Sciatic nerve (tissue), 2 donors: ENCODE measurements at regions of chr9 and their contacts with region 1.

Region 1: DNA sequence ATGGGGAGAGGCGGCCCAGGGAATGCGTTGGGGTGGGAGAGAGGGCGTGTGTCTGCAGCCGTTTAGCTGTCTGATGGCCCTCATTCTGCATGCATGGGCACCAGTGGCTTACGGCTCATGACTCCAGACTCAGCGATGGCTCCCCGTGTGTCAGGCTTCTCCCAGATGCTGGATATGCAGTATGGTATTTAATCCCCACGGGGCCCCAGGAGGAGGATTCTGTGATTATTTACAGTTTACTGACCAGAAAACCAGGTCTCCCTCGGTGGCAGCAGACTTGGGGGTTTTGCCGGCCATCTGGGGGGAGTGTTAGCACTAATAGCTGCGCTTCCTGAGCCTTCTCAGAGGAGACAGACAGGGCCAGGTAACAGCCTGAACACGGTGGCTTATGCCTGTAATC is 4.3 kb downstream of the PRDM12 start:
- DNase-seq: no peak
- ATAC-seq: no peak

Region 2: DNA sequence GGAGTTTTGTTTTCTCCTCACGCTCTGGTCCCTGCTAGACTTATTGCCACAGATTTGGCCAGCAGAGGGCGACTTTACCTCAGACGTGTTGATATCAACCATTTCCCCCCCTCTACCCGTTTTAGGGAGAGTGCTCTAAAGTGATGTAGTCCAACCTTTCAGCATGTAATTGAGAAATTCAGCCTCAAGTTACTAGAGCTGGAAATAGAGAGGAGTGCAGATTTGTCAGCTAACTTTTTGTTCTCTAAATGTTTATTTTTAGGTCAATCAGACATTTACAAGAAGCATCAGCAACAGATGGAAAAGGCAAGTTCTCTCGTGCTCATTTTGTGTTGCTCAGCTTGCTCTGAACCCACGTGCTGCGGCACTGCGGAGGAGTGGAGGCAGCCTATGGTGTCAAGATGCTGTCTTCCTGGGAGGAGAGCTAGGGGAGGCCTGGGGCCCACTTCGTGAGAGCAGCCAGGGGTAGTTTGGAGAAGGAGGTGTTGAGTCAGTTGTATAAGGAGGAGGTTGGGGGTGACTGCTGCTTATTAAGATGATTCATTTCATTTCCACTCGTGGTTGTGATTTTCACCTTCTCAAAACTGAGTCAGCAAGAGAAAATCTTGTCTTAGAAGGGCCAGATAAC is 561.3 kb before region 1 on chr9:
- intact Hi-C with region 1: no loop called
- DNase-seq: peak; percentile 95
- ATAC-seq: peak; percentile 91

Region 3: DNA sequence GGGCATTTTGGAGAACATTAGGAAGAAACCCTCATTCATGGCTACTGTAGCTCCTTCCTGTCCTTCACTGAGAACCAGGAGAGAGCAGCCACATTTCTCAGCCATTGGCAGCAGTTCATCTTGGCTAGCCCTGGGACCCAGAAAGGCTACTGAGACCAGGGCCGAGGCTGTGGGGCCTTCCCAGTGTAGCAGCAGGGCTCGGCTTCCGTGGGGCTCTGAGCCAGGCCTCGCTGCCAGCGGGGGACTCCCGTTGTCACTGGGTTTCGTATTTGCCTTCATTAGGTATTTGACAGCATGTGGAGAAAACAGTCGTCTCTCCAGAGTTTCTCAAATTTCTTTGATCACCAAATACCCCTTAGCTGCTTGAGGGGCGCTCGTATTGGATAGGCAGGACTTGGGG is 41.6 kb before region 1 on chr9:
- intact Hi-C with region 1: loop called (anchors 1 kb)
- DNase-seq: peak; percentile 35
- ATAC-seq: no peak

Region 4: GRCh38 chr9:130639119-130639810 is 29.4 kb before region 1 on chr9:
- intact Hi-C with region 1: no loop called
- DNase-seq: no peak
- ATAC-seq: no peak

Region 5: DNA sequence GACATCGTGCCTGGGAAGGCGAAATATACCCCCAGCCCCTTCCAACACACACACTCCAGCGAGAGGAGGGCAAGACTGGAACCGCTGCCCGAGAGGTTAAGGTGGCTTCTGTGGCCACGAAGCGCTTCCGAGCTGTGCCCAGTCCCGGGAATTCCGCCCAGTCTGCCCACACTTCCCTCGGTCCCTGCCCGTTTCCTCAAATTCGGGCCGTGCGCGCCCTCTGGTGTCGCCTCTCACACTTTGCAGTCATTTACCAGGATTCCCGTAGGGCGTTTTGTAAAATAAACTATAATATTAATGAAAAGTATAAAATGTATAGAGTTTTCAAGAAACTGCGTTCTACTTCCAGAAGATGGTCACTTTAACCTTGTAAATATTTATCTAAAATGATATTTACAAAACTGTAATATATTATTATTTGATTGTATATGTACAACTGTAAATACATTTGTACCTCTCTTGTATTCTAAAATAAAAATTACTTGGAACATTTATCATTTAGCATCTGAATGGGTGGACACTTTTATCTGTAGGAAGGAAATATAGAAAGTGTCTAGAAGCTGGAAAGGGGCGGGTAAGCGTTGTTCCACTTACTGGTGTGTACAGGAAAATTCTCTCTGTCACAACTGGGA is 13.9 kb after region 1 on chr9:
- intact Hi-C with region 1: no loop called
- DNase-seq: peak; percentile 85
- ATAC-seq: peak; percentile 78